ENCODE measurements at regions of chr12 and their contacts with region 1.

Region 1: DNA sequence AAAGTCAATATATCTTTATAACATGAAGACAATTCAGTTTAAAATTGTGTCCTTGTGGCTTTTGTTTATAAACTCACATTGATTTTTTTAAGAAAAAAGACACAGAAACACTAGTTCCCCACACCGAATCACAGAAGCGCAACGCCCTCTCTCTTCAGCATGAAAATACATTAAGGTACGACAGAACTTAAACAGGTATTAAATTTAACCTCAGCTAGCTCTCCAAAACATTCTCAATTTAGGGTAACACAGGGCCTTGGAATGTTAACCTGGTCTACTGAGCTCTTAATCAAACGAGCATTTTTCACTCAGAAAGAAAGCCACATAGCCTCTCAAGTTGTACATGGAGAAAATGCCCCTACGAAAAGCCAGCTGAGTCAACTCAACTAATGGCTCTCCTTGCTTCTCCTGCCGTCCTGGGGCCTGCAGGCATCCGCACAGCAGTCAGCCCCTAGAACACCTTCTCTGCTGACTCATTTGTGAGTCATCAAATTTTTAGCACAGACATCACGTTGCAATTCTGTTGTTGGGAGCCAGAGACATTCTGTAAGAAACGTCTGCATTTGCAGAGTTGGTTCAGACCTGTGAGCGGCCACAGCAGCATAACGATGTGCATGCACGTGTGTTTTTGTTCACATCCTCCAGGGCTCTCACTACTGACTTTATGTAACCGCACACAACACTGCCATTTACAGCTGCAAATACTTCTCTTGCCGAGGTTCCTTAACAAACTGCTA is 141.6 kb downstream of the ITPR2 start:
- DNase-seq: peak; percentile 96
- H3K4me3 ChIP-seq: no peak overlapping the region
- H3K27ac ChIP-seq: peak overlapping the region; percentile 85
- H3K4me1 ChIP-seq: peaks cover 50% of the 10 kb centered on the region
- H3K27me3 ChIP-seq: no peaks in the 10 kb centered on the region
- CTCF ChIP-seq: no peak
- POLR2A ChIP-seq: peak; percentile 79

Region 2: GRCh38 chr12:26623136-26623535 is 68.3 kb before region 1 on chr12:
- CTCF ChIA-PET with region 1: no interaction called
- POLR2A ChIA-PET with region 1: no interaction called
- dilution Hi-C with region 1: no loop called
- intact Hi-C with region 1: no loop called
- DNase-seq: no peak
- H3K4me3 ChIP-seq: no peak overlapping the region
- H3K27ac ChIP-seq: no peak overlapping the region
- H3K4me1 ChIP-seq: no peaks in the 10 kb centered on the region
- H3K27me3 ChIP-seq: no peaks in the 10 kb centered on the region
- CTCF ChIP-seq: no peak
- POLR2A ChIP-seq: no peak

Region 3: DNA sequence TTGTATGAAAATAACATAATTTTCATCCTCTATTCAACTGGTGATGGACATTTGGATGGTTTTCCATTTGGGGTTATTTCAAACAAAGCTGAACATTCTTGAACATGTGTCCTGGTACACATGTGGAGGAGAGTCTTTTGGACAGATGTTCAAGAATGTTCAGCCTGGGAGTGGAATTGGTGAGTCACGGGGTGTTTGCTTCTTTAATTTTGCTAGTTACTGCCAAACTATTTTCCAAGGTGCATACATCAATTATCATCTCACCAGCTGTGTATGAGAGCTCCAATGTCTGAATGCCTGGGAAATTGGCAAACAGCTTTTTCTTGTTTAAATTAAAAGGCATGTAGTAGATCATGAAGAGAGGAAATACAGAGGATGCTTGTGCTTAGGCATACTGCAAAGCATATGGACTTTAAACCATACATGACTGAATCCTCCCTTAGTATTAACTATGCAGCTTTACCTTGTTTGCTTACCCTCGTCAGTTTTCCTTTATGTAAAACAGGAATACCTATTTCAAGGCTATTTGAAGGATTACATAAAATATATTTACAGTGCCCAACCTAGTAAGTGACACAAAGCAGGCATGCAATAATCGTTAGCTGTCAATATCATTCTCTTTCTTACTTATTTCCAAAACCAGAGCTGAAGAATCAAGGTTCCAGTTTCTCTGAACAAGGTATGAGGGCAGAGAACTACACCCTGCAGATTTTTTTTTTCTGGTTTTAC is 10.5 kb before region 1 on chr12:
- CTCF ChIA-PET with region 1: interaction called, 8 read pairs
- POLR2A ChIA-PET with region 1: interaction called, 7 read pairs
- dilution Hi-C with region 1: no loop called
- intact Hi-C with region 1: loop called (anchors 1 kb)
- DNase-seq: peak; percentile 57
- H3K4me3 ChIP-seq: no peak overlapping the region
- H3K27ac ChIP-seq: peak overlapping the region; percentile 48
- H3K4me1 ChIP-seq: peaks cover 52% of the 10 kb centered on the region
- H3K27me3 ChIP-seq: no peaks in the 10 kb centered on the region
- CTCF ChIP-seq: no peak
- POLR2A ChIP-seq: no peak

Region 4: GRCh38 chr12:26711569-26711968 is 20.2 kb after region 1 on chr12:
- CTCF ChIA-PET with region 1: no interaction called
- POLR2A ChIA-PET with region 1: no interaction called
- dilution Hi-C with region 1: no loop called
- intact Hi-C with region 1: no loop called
- DNase-seq: no peak
- H3K4me3 ChIP-seq: no peak overlapping the region
- H3K27ac ChIP-seq: no peak overlapping the region
- H3K4me1 ChIP-seq: no peaks in the 10 kb centered on the region
- H3K27me3 ChIP-seq: no peaks in the 10 kb centered on the region
- CTCF ChIP-seq: no peak
- POLR2A ChIP-seq: no peak

Measured in endothelial cell of umbilical vein (primary cell).